ENCODE measurements at regions of chr6 and their contacts with region 1.

Region 1: DNA sequence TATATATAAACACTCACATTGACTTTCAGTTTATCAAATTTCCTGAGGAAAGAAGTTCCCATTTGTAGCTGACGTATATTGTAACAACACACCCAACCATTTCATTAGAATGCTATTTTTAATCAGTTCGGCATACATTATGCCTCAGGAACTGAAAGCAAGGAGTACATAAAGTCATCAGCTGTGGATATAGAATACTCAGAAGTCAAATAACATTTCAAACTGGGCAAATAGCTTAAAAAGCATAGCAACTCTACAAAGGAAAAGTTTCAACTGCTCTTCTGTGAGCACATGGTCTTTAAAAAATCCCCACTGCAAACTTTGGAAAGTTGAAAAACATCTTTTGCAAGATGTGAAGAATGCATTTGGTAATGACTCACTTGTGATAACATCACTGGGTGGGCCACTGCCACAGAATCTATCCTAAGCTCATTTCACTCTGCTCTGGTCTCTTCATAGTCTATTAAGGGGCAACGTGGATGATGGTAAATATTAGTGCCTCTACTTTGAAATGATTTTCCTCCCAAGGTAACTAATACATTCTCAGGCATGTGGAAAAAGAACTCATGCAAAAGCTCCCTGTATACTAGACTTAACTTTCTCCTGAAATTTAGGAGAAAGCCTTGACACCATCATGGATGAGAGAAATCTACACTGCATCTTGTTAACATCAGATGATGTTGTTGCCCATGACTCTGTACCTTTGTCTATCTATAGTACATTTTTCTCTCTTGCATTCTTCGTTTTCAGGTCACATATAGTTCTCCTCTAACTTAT is 49.2 kb downstream of the FYN start:
- DNase-seq: peak in 1 of 5 donors; percentile 73
- H3K4me3 ChIP-seq: no peak overlapping the region
- H3K4me3 Mint-ChIP-seq: peak overlapping the region; percentile 4 to 75 (median 58)
- H3K27ac ChIP-seq: peak overlapping the region; percentile 49
- H3K27ac Mint-ChIP-seq: peak overlapping the region; percentile 67 to 95 (median 87)
- H3K4me1 ChIP-seq: peaks cover 76% of the 10 kb centered on the region
- H3K4me1 Mint-ChIP-seq: peaks cover 64 to 82% (median 70%) of the 10 kb centered on the region in 4 donors
- H3K27me3 ChIP-seq: no peaks in the 10 kb centered on the region
- H3K27me3 Mint-ChIP-seq: no peaks in the 10 kb centered on the region

Region 2: GRCh38 chr6:111812060-111813038 is 11.7 kb before region 1 on chr6:
- CTCF ChIA-PET with region 1: interaction called, 12 read pairs
- POLR2A ChIA-PET with region 1: interaction called, 14 read pairs
- intact Hi-C with region 1: loop called (anchors 2 kb)
- DNase-seq: peak in 1 of 5 donors; percentile 33
- H3K4me3 ChIP-seq: no peak overlapping the region
- H3K4me3 Mint-ChIP-seq: peak overlapping the region in 7 of 8 donors; percentile 47 to 86 (median 68)
- H3K27ac ChIP-seq: peak overlapping the region; percentile 28
- H3K27ac Mint-ChIP-seq: peak overlapping the region; percentile 83 to 95 (median 94)
- H3K4me1 ChIP-seq: peaks cover 97% of the 10 kb centered on the region
- H3K4me1 Mint-ChIP-seq: peaks cover 61 to 79% (median 74%) of the 10 kb centered on the region in 4 donors
- H3K27me3 ChIP-seq: no peaks in the 10 kb centered on the region
- H3K27me3 Mint-ChIP-seq: no peaks in the 10 kb centered on the region